ENCODE measurements at regions of chr3 and their contacts with region 1.

Region 1: GRCh38 chr3:8416965-8417364 is 84.7 kb upstream of the LMCD1 start:
- DNase-seq: no peak
- H3K4me3 ChIP-seq: no peak overlapping the region
- CTCF ChIP-seq: no peak

Region 2: GRCh38 chr3:8301728-8302462 is 115.1 kb before region 1 on chr3:
- CTCF ChIA-PET with region 1: interaction called, 54 read pairs
- POLR2A ChIA-PET with region 1: no interaction called
- DNase-seq: peak; percentile 26
- H3K4me3 ChIP-seq: no peak overlapping the region
- CTCF ChIP-seq: peak; percentile 59

Region 3: DNA sequence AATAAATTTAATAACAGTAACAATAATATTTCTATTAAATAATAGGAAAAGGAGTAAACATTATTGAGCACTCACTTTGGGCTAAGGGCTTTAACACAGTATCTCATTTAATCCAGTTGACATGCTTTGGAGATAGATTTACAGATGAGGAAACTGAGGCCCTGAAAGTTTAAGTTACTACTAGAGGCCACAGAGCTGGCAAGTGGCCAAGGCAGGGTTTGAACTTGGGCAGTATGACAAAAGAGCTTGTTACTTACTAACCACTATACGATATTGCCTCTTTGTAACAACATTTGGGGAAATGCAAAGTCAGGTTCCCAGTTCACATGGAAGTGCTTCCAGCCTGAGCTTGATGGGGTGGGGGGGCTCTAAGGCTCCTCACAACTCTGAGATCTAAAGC is 64.5 kb before region 1 on chr3:
- CTCF ChIA-PET with region 1: no interaction called
- POLR2A ChIA-PET with region 1: no interaction called
- DNase-seq: no peak
- H3K4me3 ChIP-seq: no peak overlapping the region
- CTCF ChIP-seq: no peak

Region 4: DNA sequence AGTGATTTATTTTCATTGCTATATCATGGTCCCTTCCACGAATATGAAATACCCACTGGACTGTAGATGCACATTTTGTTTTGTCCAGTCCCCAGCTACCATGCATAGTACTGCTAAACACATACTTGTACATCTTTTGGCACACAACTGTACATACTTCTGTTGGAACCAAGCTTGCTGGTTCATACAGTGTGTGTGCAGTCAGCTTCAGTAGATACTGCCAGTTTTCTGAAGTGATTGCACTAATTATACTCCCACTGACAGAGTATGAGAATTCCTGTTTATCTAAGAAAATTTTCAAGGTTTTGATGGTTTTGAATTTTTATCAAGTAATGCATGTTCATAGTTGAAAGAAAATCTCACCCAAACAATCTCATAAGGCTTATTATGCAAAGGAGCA is 16.1 kb before region 1 on chr3:
- CTCF ChIA-PET with region 1: interaction called, 20 read pairs
- POLR2A ChIA-PET with region 1: no interaction called
- DNase-seq: no peak
- H3K4me3 ChIP-seq: no peak overlapping the region
- CTCF ChIP-seq: no peak

Region 5: GRCh38 chr3:8519156-8519555 is 102.2 kb after region 1 on chr3:
- CTCF ChIA-PET with region 1: no interaction called
- POLR2A ChIA-PET with region 1: no interaction called
- DNase-seq: no peak
- H3K4me3 ChIP-seq: no peak overlapping the region
- CTCF ChIP-seq: no peak

Region 6: GRCh38 chr3:8607234-8608040 is 190.5 kb after region 1 on chr3:
- CTCF ChIA-PET with region 1: interaction called, 13 read pairs
- POLR2A ChIA-PET with region 1: no interaction called
- DNase-seq: no peak
- H3K4me3 ChIP-seq: no peak overlapping the region
- CTCF ChIP-seq: peak; percentile 73